Activated naive CD4-positive, alpha-beta T cell treated with anti-CD3 and anti-CD28 coated beads, Interleukin-2, amount 10 ng/mL, durations not matched to agents 7 days and 5 days (primary cell): ENCODE measurements at regions of chr16 and their contacts with region 1.

Region 1: GRCh38 chr16:26569793-26570192 is 496.9 kb upstream of the C16orf82 start:
- DNase-seq: peak; percentile 37
- H3K4me3 Mint-ChIP-seq: no peak overlapping the region
- H3K27ac Mint-ChIP-seq: no peak overlapping the region
- H3K4me1 Mint-ChIP-seq: peaks cover 4% of the 10 kb centered on the region
- H3K27me3 Mint-ChIP-seq: peaks cover 40% of the 10 kb centered on the region

Region 2: DNA sequence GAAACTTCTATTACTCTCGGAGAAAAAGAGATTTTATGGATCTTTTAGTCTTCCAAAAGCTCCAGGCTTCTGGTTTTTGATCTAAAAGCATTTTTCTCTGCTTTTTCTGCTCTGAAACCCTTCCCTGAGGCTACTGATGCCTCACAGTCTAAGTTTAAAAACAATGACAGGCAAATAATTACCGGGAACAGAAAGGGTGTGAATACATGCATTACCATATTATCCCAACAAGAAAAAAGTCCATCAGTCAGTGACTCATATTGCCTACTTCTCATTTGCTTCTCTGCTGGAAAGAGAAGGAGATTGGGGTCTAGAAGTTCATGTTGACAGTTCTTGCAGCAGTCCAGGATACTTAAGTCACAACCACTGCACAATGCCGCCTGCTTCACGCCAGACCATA is 14.0 kb after region 1 on chr16:
- CTCF ChIA-PET with region 1: interaction called, 14 read pairs
- DNase-seq: no peak
- H3K4me3 Mint-ChIP-seq: no peak overlapping the region
- H3K27ac Mint-ChIP-seq: no peak overlapping the region
- H3K4me1 Mint-ChIP-seq: peaks cover 4% of the 10 kb centered on the region
- H3K27me3 Mint-ChIP-seq: peaks cover 48% of the 10 kb centered on the region

Region 3: GRCh38 chr16:26598061-26598460 is 28.3 kb after region 1 on chr16:
- CTCF ChIA-PET with region 1: interaction called, 11 read pairs
- DNase-seq: peak; percentile 86
- H3K4me3 Mint-ChIP-seq: no peak overlapping the region
- H3K27ac Mint-ChIP-seq: peak overlapping the region; percentile 88
- H3K4me1 Mint-ChIP-seq: peaks cover 89% of the 10 kb centered on the region
- H3K27me3 Mint-ChIP-seq: peaks cover 8% of the 10 kb centered on the region

Region 4: GRCh38 chr16:26614237-26614841 is 44.5 kb after region 1 on chr16:
- CTCF ChIA-PET with region 1: interaction called, 10 read pairs
- DNase-seq: peak; percentile 50
- H3K4me3 Mint-ChIP-seq: peak overlapping the region; percentile 70
- H3K27ac Mint-ChIP-seq: peak overlapping the region; percentile 90
- H3K4me1 Mint-ChIP-seq: peaks cover 37% of the 10 kb centered on the region
- H3K27me3 Mint-ChIP-seq: peaks cover 22% of the 10 kb centered on the region